Activated naive CD4-positive, alpha-beta T cell treated with anti-CD3 and anti-CD28 coated beads, Interleukin-2, amount 10 ng/mL, durations not matched to agents 7 days and 5 days (primary cell): ENCODE measurements at regions of chr2 and their contacts with region 1.

Region 1: GRCh38 chr2:230824406-230824978 is 40.2 kb upstream of the ITM2C start:
- DNase-seq: peak; percentile 62
- H3K4me3 Mint-ChIP-seq: no peak overlapping the region
- H3K27ac Mint-ChIP-seq: peak overlapping the region; percentile 24
- H3K4me1 Mint-ChIP-seq: peaks cover 22% of the 10 kb centered on the region
- H3K27me3 Mint-ChIP-seq: peaks cover 46% of the 10 kb centered on the region

Region 2: GRCh38 chr2:230847883-230848388 is 23.4 kb after region 1 on chr2:
- CTCF ChIA-PET with region 1: interaction called, 28 read pairs
- DNase-seq: peak; percentile 91
- H3K4me3 Mint-ChIP-seq: no peak overlapping the region
- H3K27ac Mint-ChIP-seq: no peak overlapping the region
- H3K4me1 Mint-ChIP-seq: peaks cover 2% of the 10 kb centered on the region
- H3K27me3 Mint-ChIP-seq: peaks cover 68% of the 10 kb centered on the region